ENCODE measurements at regions of chr2 and their contacts with region 1.

Region 1: DNA sequence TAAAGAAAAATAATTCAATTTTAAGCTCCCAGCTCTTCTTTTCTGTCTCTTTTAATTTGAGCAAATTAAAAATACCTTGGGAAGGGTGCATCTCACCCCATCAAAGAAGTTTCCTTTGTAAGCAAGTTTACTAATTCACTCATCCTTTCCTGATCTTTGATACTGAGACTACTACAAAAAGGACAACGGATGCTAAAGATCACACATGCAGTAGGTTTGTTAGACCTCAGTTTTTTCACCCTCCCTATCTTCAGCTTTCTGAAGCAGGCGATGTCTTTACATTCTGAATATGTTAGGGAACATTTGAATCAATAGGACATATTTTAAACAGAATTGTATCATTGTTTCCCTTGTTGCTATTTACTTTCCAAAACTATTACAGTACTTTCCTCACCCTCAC is 6.0 kb upstream of the HNRNPLL start:
- DNase-seq: no peak
- H3K4me3 ChIP-seq: no peak overlapping the region
- H3K27ac ChIP-seq: no peak overlapping the region
- H3K4me1 ChIP-seq: peaks cover 46% of the 10 kb centered on the region
- CTCF ChIP-seq: no peak

Region 2: GRCh38 chr2:37635504-37636380 is 973.0 kb before region 1 on chr2:
- CTCF ChIA-PET with region 1: no interaction called
- POLR2A ChIA-PET with region 1: no interaction called
- intact Hi-C with region 1: no loop called
- DNase-seq: no peak
- H3K4me3 ChIP-seq: no peak overlapping the region
- H3K27ac ChIP-seq: no peak overlapping the region
- H3K4me1 ChIP-seq: no peaks in the 10 kb centered on the region
- CTCF ChIP-seq: no peak

Region 3: DNA sequence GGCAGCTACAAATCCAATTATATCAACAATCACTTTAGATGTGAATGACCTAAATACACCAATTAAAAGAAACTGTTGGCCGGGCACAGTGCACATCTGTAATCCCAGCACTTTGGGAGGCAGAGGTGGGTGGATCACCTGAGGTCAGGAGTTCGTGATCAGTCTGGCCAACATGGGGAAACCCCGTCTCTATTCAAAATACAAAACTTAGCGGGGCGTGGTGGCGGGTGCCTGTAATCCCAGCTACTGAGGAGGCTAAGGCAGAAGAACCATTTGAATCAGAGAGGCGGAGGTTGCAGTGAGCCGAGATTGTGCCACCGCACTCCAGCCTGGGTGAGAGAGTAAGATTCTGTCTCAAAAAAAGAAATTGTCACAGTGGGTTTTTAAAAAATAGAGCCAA is 281.2 kb before region 1 on chr2:
- CTCF ChIA-PET with region 1: no interaction called
- POLR2A ChIA-PET with region 1: no interaction called
- intact Hi-C with region 1: no loop called
- DNase-seq: no peak
- H3K4me3 ChIP-seq: no peak overlapping the region
- H3K27ac ChIP-seq: no peak overlapping the region
- H3K4me1 ChIP-seq: peaks cover 9% of the 10 kb centered on the region
- CTCF ChIP-seq: no peak

Region 4: DNA sequence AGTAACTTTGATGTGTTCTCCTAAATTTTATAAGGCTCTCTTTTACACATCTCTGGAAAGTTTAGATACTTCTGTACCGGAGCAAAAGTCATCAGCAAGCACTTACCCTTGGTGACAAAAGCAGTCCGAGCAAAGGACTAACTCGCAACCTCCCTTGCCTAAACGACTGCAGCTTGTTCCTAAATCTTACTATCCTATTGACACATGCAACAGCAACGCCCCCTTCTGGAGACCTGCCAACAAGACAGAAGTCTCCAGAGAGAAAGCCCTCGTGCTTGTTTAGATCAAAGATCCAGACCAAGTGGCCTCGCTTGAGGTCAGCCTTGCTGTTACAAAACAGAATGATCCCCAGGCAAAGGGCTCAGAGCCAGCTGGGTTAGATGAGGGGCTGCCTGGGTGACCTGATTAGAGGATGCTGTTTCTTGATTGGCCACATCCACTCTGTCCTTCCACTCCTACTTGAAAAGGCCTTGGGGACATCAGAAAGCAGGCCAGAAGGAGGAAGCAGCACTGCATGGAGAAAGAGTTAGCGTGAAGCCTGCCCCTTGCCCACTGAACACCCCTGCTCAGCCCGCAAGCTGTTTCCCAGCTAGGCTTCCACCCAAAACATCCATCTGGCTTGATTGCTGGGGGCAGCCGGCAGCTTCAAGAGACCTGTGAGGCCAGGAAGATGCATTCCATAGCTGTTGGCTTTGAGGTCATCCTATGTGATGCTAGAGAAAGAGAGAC is 100.3 kb before region 1 on chr2:
- CTCF ChIA-PET with region 1: no interaction called
- POLR2A ChIA-PET with region 1: no interaction called
- intact Hi-C with region 1: no loop called
- DNase-seq: peak; percentile 94
- H3K4me3 ChIP-seq: no peak overlapping the region
- H3K27ac ChIP-seq: no peak overlapping the region
- H3K4me1 ChIP-seq: peaks cover 12% of the 10 kb centered on the region
- CTCF ChIP-seq: peak; percentile 98

Region 5: GRCh38 chr2:38622210-38622609 is 13.5 kb after region 1 on chr2:
- CTCF ChIA-PET with region 1: interaction called, 4 read pairs
- POLR2A ChIA-PET with region 1: interaction called, 9 read pairs
- intact Hi-C with region 1: loop called (anchors 2 kb)
- DNase-seq: no peak
- H3K4me3 ChIP-seq: no peak overlapping the region
- H3K27ac ChIP-seq: no peak overlapping the region
- H3K4me1 ChIP-seq: peaks cover 38% of the 10 kb centered on the region
- CTCF ChIP-seq: no peak

Measured in OCI-LY7 (cell line).